Ascending aorta (tissue), 2 donors: ENCODE measurements at regions of chr14 and their contacts with region 1.

Region 1: DNA sequence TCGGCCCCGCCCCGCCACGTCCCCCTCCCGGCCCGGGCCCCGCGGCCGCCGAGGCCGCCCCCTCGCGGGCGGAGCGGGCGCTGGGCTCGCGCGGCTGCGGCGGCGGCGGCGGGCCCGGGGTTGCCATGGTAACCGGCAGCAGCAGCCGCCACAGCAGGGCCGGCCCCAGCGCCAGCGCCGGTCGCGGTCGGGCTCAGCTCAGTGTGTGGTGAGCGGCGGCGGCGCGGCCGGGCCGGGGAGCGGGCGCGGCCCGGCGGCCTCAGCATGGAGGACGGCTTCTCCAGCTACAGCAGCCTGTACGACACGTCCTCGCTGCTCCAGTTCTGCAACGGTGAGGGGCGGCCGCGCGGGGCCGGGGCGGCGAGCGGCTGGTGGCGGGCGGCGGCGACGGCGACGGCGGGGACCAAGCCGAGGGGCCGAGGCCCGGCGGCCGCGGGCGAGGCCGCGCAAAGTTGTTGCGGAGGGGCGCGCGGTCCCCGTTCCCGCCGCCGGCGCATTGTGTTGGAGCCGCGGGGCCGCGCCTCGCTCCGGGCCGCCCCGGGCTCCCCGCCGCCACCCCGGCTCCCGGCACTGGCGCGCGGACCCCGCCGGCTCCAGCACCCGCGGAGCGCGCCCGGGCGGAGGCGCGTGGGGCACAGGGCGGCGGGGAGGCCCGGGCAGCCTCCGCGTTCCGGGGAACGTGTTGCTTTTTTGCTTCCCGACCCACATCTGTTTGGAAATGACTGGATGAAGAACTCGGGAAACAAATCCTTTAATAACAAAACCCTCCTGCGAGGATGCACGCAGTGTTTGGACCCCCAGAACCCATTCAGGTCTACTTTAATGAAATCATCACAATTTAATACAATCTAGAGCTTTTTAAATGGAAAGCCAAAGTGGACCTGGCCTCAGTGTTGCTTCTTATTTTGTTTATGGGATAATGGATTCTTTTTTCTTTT is at the start of gene EML1:
- DNase-seq: peak in 1 of 2 donors; percentile 89
- H3K4me3 ChIP-seq: peak within 1 kb of the TSS; percentile 73 to 84
- H3K27ac ChIP-seq: peak within 1 kb of the TSS; percentile 88 to 96
- H3K4me1 ChIP-seq: peaks cover 0 to 6% of the 10 kb centered on the region in 2 donors
- H3K27me3 ChIP-seq: no peaks in the 10 kb centered on the region
- CTCF ChIP-seq: no peak
- total RNA-seq, gene EML1: 28.3 TPM

Region 2: DNA sequence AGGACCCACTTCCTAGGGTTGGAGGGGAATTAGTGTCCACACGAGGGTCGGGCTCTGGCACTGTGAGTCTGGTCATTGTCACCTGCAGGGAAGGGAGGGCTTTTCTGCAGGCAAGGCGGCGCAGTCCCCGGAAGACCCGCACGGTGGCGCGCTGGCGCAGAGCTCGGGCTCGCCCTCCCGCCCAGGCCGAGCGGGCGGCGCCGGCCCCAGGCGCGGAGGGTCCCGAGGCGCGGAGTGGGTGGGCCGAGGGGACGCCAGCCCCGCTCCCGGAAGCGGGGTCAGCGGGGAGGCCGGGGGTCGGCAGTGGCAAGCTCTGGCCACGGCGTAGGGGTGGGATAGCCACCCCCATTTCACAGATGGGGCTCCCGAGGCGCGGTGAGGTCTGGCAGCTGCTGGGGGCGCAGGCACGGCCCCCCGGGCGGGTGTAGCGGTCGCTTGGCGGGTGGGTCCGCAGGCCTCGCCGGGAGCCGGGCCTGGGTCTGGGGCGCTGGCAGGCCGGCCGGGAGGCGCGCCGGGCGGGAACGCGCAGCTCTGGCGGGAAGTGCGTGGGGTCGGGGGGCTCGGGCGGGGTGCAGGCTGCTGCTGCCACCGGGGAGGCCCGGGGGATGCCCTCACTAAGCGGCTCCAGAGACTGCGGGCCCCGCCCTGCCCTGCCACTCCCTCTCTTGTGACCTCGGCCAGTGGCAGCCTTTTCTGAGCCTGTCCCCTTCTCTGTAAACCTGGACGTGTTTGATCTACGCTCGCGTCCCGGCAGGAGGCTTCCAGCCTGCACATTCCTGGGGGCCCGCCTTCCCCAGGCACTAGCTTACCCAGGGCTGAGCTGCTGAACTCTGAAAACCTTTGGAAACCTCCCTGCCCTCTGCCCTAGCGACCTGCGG is 63.3 kb before region 1 on chr14:
- intact Hi-C with region 1: loop called (anchors 1 kb)
- DNase-seq: peak; percentile 1 to 81
- H3K4me3 ChIP-seq: peak overlapping the region; percentile 52 to 85
- H3K27ac ChIP-seq: peak overlapping the region; percentile 22 to 30
- H3K4me1 ChIP-seq: peaks cover 3 to 13% of the 10 kb centered on the region in 2 donors
- H3K27me3 ChIP-seq: no peaks in the 10 kb centered on the region
- CTCF ChIP-seq: peak; percentile 66 to 89 (median 78)

Region 3: GRCh38 chr14:100213956-100214774 is 420.7 kb after region 1 on chr14:
- intact Hi-C with region 1: loop called (anchors 10 kb)
- DNase-seq: peak in 1 of 2 donors; percentile 91
- H3K4me3 ChIP-seq: peak overlapping the region; percentile 82 to 83
- H3K27ac ChIP-seq: peak overlapping the region; percentile 92 to 97
- H3K4me1 ChIP-seq: peaks cover 0 to 10% of the 10 kb centered on the region in 2 donors
- H3K27me3 ChIP-seq: no peaks in the 10 kb centered on the region
- CTCF ChIP-seq: no peak